Right ventricle myocardium superior (tissue), 1 donor: ENCODE measurements at regions of chr1 and their contacts with region 1.

Region 1: GRCh38 chr1:15046487-15047165 is 106.9 kb upstream of the TMEM51 start:
- DNase-seq: peak; percentile 73
- ATAC-seq: peak; percentile 85

Region 2: GRCh38 chr1:13960375-13960987 is 1086.1 kb before region 1 on chr1:
- intact Hi-C with region 1: loop called (anchors 10 kb)
- DNase-seq: peak; percentile 72
- ATAC-seq: peak; percentile 77

Region 3: GRCh38 chr1:14113841-14114567 is 932.6 kb before region 1 on chr1:
- intact Hi-C with region 1: loop called (anchors 10 kb)
- DNase-seq: no peak
- ATAC-seq: peak; percentile 73

Region 4: GRCh38 chr1:14778898-14779865 is 267.4 kb before region 1 on chr1:
- intact Hi-C with region 1: loop called (anchors 2 kb)
- DNase-seq: no peak
- ATAC-seq: no peak